ENCODE measurements at regions of chr17 and their contacts with region 1.

Region 1: GRCh38 chr17:79393358-79394202 is 217.3 kb downstream of the RBFOX3 start:
- DNase-seq: peak; percentile 79 to 88 (median 84)
- ATAC-seq: peak; percentile 77
- H3K4me3 ChIP-seq: no peak overlapping the region
- H3K27ac ChIP-seq: no peak overlapping the region
- H3K4me1 ChIP-seq: no peaks in the 10 kb centered on the region
- H3K27me3 ChIP-seq: peaks cover 0 to 17% of the 10 kb centered on the region in 2 donors
- CTCF ChIP-seq: peak; percentile 82 to 92 (median 86)
- POLR2A ChIP-seq: no peak

Region 2: GRCh38 chr17:79087428-79088143 is 306.0 kb before region 1 on chr17:
- intact Hi-C with region 1: loop called (anchors 5 kb)
- DNase-seq: peak; percentile 72 to 83 (median 76)
- ATAC-seq: peak; percentile 72
- H3K4me3 ChIP-seq: no peak overlapping the region
- H3K27ac ChIP-seq: no peak overlapping the region
- H3K4me1 ChIP-seq: no peaks in the 10 kb centered on the region
- H3K27me3 ChIP-seq: no peaks in the 10 kb centered on the region
- CTCF ChIP-seq: peak; percentile 77 to 90 (median 85)
- POLR2A ChIP-seq: no peak

Region 3: GRCh38 chr17:79188048-79188447 is 205.5 kb before region 1 on chr17:
- intact Hi-C with region 1: loop called (anchors 5 kb)
- DNase-seq: peak; percentile 12 to 46 (median 32)
- ATAC-seq: peak; percentile 51
- H3K4me3 ChIP-seq: no peak overlapping the region
- H3K27ac ChIP-seq: no peak overlapping the region
- H3K4me1 ChIP-seq: peaks cover 6% of the 10 kb centered on the region
- H3K27me3 ChIP-seq: peaks cover 0 to 8% of the 10 kb centered on the region in 2 donors
- CTCF ChIP-seq: peak; percentile 20 to 65 (median 49)
- POLR2A ChIP-seq: no peak

Region 4: DNA sequence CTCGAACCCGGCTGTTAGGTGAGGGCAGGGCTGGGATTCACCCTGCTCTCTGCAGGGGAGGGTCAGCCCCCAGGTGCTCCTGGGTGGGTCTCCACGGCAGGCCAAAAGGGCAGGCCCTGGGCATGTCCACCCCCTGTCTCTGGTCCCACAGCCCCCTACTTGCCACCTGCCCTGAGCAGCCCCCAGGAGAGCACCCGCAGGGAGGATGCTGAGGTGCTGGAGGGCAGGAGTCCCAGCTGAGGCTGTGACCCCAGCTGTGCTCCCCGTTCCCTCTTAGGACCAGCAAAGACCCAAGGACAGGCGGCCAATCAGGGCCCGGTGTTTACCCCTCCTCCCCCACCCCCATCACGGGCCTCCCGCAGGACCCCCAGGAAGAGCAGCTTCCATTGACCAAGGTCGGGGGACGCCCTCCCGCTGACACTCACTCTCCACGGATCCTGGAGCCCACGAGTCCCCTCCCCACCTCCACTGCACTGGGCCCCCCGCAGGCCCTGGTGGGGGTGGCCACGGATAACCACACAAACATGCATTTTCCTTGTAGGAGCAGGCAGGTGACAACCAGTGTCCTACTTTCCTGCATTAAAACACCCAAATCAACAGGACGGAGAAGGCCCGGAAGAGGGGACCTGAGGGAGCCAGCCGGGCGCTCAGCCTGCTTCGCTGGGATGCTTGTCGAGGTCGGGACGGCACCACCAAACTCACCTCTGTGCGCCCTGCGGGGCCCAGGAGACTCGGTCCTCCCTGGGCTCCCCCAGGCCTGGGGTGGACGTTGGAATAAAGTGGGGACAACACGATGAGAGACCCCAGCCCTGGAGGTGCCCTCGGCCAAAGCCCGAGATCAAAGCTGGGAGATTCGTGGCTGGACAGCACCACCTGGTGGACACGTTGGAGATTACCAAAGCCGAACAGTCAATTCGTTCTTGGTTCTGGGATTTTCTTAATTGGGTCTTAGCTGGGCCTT is 314.6 kb after region 1 on chr17:
- intact Hi-C with region 1: loop called (anchors 10 kb)
- DNase-seq: peak; percentile 40 to 64 (median 61)
- ATAC-seq: peak; percentile 68
- H3K4me3 ChIP-seq: no peak overlapping the region
- H3K27ac ChIP-seq: no peak overlapping the region
- H3K4me1 ChIP-seq: peaks cover 7% of the 10 kb centered on the region
- H3K27me3 ChIP-seq: no peaks in the 10 kb centered on the region
- CTCF ChIP-seq: peak; percentile 63 to 77 (median 73)
- POLR2A ChIP-seq: no peak